ENCODE measurements at regions of chr5 and their contacts with region 1.

Region 1: GRCh38 chr5:146426853-146427618 is 20.1 kb upstream of the TCERG1 start:
- DNase-seq: no peak
- H3K4me3 ChIP-seq: no peak overlapping the region
- H3K27ac ChIP-seq: no peak overlapping the region
- H3K4me1 ChIP-seq: no peaks in the 10 kb centered on the region
- H3K27me3 ChIP-seq: peaks cover 33% of the 10 kb centered on the region
- CTCF ChIP-seq: peak; percentile 74

Region 2: DNA sequence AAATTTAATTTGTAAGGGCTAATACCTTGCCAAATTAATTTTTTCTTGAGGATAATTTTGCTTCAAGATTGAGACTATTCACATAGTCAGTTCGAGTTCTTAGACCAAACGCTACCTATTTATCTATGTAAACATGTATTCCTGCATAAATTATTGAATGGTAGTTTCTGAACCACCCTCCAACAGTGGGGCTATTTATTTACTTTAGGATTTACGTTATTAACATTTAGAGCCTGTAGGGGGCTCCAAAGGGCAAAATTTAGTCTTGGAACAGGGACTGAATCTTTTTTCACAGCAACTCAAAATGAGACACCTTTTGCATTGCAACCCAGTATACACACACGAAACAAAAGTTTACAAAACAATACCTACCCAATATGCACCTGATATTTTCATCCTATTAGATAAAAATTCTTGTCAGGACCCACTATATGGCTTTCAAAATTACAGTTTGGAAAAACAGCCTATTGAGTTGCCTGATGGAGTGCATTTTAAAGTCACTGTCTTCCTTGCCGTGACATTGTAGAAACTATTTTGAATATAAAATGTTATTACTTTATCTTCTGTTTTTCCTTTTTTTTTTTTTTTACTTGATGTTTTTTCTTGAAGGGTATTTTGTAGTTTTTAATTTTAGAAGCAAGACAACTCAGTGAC is 135.5 kb before region 1 on chr5:
- intact Hi-C with region 1: loop called (anchors 5 kb)
- DNase-seq: no peak
- H3K4me3 ChIP-seq: no peak overlapping the region
- H3K27ac ChIP-seq: no peak overlapping the region
- H3K4me1 ChIP-seq: peaks cover 3% of the 10 kb centered on the region
- H3K27me3 ChIP-seq: no peaks in the 10 kb centered on the region
- CTCF ChIP-seq: peak; percentile 66